H1 (cell line): ENCODE measurements at regions of chr12 and their contacts with region 1.

Region 1: GRCh38 chr12:132986001-132986912 is at the start of gene ZNF26:
- DNase-seq: peak; percentile 83 to 87
- H3K4me3 ChIP-seq: peak within 1 kb of the TSS; percentile 90 to 98 (median 95)
- H3K27ac ChIP-seq: peak within 1 kb of the TSS; percentile 38; the same call in 1 of the 2 replicates
- H3K4me1 ChIP-seq: no peaks in the 10 kb centered on the region; a peak in 1 of 7 replicates
- H3K27me3 ChIP-seq: no peaks in the 10 kb centered on the region
- CTCF ChIP-seq: no peak
- EP300 ChIP-seq: no peak
- POLR2A ChIP-seq: peak in 1 of 2 experiments; percentile 91; a peak in 2 of 3 replicates
- RAD21 ChIP-seq: no peak
- total RNA-seq, gene ZNF26: 7.6 and 8.4 TPM in 2 replicates

Region 2: DNA sequence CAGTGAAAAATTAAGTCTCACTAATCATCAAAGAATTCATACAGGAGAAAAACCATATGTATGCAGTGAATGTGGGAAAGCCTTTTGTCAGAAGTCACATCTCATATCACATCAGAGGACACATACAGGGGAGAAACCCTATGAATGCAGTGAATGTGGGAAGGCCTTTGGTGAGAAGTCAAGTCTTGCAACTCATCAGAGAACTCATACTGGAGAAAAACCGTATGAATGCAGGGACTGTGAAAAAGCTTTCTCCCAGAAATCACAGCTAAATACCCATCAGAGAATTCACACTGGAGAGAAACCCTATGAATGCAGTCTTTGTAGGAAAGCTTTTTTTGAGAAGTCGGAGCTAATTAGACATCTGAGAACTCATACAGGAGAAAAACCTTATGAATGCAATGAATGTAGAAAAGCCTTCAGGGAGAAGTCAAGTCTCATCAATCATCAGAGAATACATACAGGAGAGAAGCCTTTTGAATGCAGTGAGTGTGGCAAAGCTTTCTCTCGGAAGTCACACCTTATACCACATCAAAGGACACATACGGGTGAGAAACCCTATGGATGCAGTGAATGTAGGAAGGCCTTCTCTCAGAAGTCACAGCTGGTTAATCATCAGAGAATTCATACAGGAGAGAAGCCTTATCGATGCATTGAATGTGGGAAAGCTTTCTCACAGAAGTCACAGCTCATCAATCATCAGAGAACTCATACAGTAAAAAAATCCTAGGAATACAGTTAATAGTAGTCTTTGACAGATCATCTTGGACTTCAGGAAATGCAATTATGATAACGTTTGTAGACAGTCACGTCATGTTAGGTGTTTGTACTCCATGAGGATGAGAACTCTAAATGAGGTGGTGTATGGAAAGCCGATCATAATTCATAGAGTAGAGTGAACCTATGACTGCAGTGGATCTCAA is 72.2 kb after region 1 on chr12:
- CTCF ChIA-PET with region 1: no interaction called
- POLR2A ChIA-PET with region 1: interaction called, 14 read pairs
- DNase-seq: no peak
- H3K4me3 ChIP-seq: peak overlapping the region in 1 of 4 experiments; percentile 42; a peak in 1 of 8 replicates
- H3K27ac ChIP-seq: no peak overlapping the region
- H3K4me1 ChIP-seq: no peaks in the 10 kb centered on the region
- H3K27me3 ChIP-seq: no peaks in the 10 kb centered on the region
- CTCF ChIP-seq: no peak
- EP300 ChIP-seq: no peak
- POLR2A ChIP-seq: peak in 1 of 2 experiments; percentile 6; a peak in 1 of 3 replicates
- RAD21 ChIP-seq: no peak

Region 3: GRCh38 chr12:133080368-133081158 is 94.3 kb after region 1 on chr12 and contains the start of gene ZNF140:
- CTCF ChIA-PET with region 1: no interaction called
- POLR2A ChIA-PET with region 1: interaction called, 18 read pairs
- DNase-seq: peak; percentile 94
- H3K4me3 ChIP-seq: peak within 1 kb of the TSS; percentile 89 to 100 (median 94)
- H3K27ac ChIP-seq: peak within 1 kb of the TSS; percentile 97
- H3K4me1 ChIP-seq: no peaks in the 10 kb centered on the region
- H3K27me3 ChIP-seq: no peaks in the 10 kb centered on the region
- CTCF ChIP-seq: peak in 2 of 3 experiments; percentile 6 to 14; a peak in 2 of 4 replicates
- EP300 ChIP-seq: no peak
- POLR2A ChIP-seq: peak in 1 of 2 experiments; percentile 89; a peak in 2 of 3 replicates
- RAD21 ChIP-seq: peak; percentile 36 to 37; a peak in 3 of 4 replicates
- total RNA-seq, gene ZNF140: 13.8 and 14.3 TPM in 2 replicates

Region 4: GRCh38 chr12:133181238-133181959 is 195.1 kb after region 1 on chr12 and contains the start of gene ZNF268:
- CTCF ChIA-PET with region 1: no interaction called
- POLR2A ChIA-PET with region 1: interaction called, 14 read pairs
- DNase-seq: peak; percentile 91 to 98
- H3K4me3 ChIP-seq: peak within 1 kb of the TSS; percentile 84 to 100 (median 93)
- H3K27ac ChIP-seq: peak within 1 kb of the TSS; percentile 90
- H3K4me1 ChIP-seq: no peaks in the 10 kb centered on the region
- H3K27me3 ChIP-seq: no peaks in the 10 kb centered on the region
- CTCF ChIP-seq: peak; percentile 78 to 80 (median 80)
- EP300 ChIP-seq: peak in 1 of 2 experiments; percentile 59; a peak in 1 of 3 replicates
- POLR2A ChIP-seq: peak; percentile 85 to 94
- RAD21 ChIP-seq: peak; percentile 78 to 79
- total RNA-seq, gene ZNF268: 22.3 and 23.5 TPM in 2 replicates